ENCODE measurements at regions of chr6 and their contacts with region 1.

Region 1: GRCh38 chr6:3929281-3929798 is 80.2 kb downstream of the FAM50B start:
- DNase-seq: no peak
- H3K4me3 ChIP-seq: no peak overlapping the region
- H3K27ac ChIP-seq: peak overlapping the region in 3 of 4 donors; percentile 46 to 48 (median 47)
- H3K4me1 ChIP-seq: no peaks in the 10 kb centered on the region
- H3K27me3 ChIP-seq: no peaks in the 10 kb centered on the region
- CTCF ChIP-seq: no peak
- EP300 ChIP-seq: no peak
- POLR2A ChIP-seq: no peak

Region 2: GRCh38 chr6:3865463-3865862 is 63.9 kb before region 1 on chr6:
- in situ Hi-C with region 1: no loop called
- intact Hi-C with region 1: no loop called
- DNase-seq: no peak
- H3K4me3 ChIP-seq: no peak overlapping the region
- H3K27ac ChIP-seq: no peak overlapping the region
- H3K4me1 ChIP-seq: peaks cover 0 to 12% (median 8%) of the 10 kb centered on the region in 4 donors
- H3K27me3 ChIP-seq: no peaks in the 10 kb centered on the region
- CTCF ChIP-seq: no peak
- EP300 ChIP-seq: no peak
- POLR2A ChIP-seq: no peak

Region 3: GRCh38 chr6:3882866-3883265 is 46.5 kb before region 1 on chr6:
- in situ Hi-C with region 1: no loop called
- intact Hi-C with region 1: loop called (anchors 2 kb)
- DNase-seq: no peak
- H3K4me3 ChIP-seq: no peak overlapping the region
- H3K27ac ChIP-seq: peak overlapping the region in 1 of 4 donors; percentile 41
- H3K4me1 ChIP-seq: peaks cover 0 to 13% (median 7%) of the 10 kb centered on the region in 4 donors
- H3K27me3 ChIP-seq: no peaks in the 10 kb centered on the region
- CTCF ChIP-seq: no peak
- EP300 ChIP-seq: no peak
- POLR2A ChIP-seq: no peak

Measured in transverse colon (tissue), 4 donors.